ENCODE measurements at regions of chr7 and their contacts with region 1.

Region 1: GRCh38 chr7:104627516-104627915 is 299.1 kb downstream of the LHFPL3 start:
- DNase-seq: no peak
- ATAC-seq: no peak
- H3K4me3 ChIP-seq: no peak overlapping the region
- H3K27ac ChIP-seq: no peak overlapping the region
- H3K4me1 ChIP-seq: no peaks in the 10 kb centered on the region
- H3K27me3 ChIP-seq: peaks cover 10% of the 10 kb centered on the region; the same call in 1 of the 2 replicates
- CTCF ChIP-seq: no peak
- POLR2A ChIP-seq: no peak
- RAD21 ChIP-seq: no peak

Region 2: GRCh38 chr7:104552102-104552501 is 75.4 kb before region 1 on chr7:
- CTCF ChIA-PET with region 1: no interaction called
- POLR2A ChIA-PET with region 1: no interaction called
- RAD21 ChIA-PET with region 1: no interaction called
- intact Hi-C with region 1: loop called (anchors 10 kb)
- DNase-seq: peak; percentile 2
- ATAC-seq: no peak
- H3K4me3 ChIP-seq: no peak overlapping the region
- H3K27ac ChIP-seq: no peak overlapping the region
- H3K4me1 ChIP-seq: no peaks in the 10 kb centered on the region
- H3K27me3 ChIP-seq: no peaks in the 10 kb centered on the region
- CTCF ChIP-seq: no peak
- POLR2A ChIP-seq: no peak
- RAD21 ChIP-seq: no peak